CD8-positive, alpha-beta memory T cell (primary cell): ENCODE measurements at regions of chr12 and their contacts with region 1.

Region 1: GRCh38 chr12:6873094-6874014 is at the start of gene SPSB2:
- DNase-seq: peak; percentile 98 to 100 (median 99)
- H3K4me3 ChIP-seq: peak within 1 kb of the TSS; percentile 96
- H3K4me3 Mint-ChIP-seq: peak within 1 kb of the TSS; percentile 83 to 97 (median 89)
- H3K27ac ChIP-seq: peak within 1 kb of the TSS; percentile 90
- H3K27ac Mint-ChIP-seq: peak within 1 kb of the TSS; percentile 85 to 99 (median 92)
- H3K4me1 ChIP-seq: peaks cover 40% of the 10 kb centered on the region
- H3K4me1 Mint-ChIP-seq: peaks cover 41 to 53% (median 52%) of the 10 kb centered on the region in 3 donors
- H3K27me3 ChIP-seq: no peaks in the 10 kb centered on the region
- H3K27me3 Mint-ChIP-seq: no peaks in the 10 kb centered on the region
- total RNA-seq, gene SPSB2: 7.7 to 8.1 TPM

Region 2: GRCh38 chr12:6825398-6826124 is 47.8 kb before region 1 on chr12:
- CTCF ChIA-PET with region 1: interaction called, 14 read pairs
- POLR2A ChIA-PET with region 1: interaction called, 4 read pairs
- DNase-seq: peak; percentile 62 to 80 (median 71)
- H3K4me3 ChIP-seq: no peak overlapping the region
- H3K4me3 Mint-ChIP-seq: peak overlapping the region in 1 of 7 donors; percentile 70
- H3K27ac ChIP-seq: no peak overlapping the region
- H3K27ac Mint-ChIP-seq: no peak overlapping the region
- H3K4me1 ChIP-seq: peaks cover 18% of the 10 kb centered on the region
- H3K4me1 Mint-ChIP-seq: peaks cover 20 to 36% (median 24%) of the 10 kb centered on the region in 3 donors
- H3K27me3 ChIP-seq: peaks cover 25% of the 10 kb centered on the region
- H3K27me3 Mint-ChIP-seq: peaks cover 26 to 68% of the 10 kb centered on the region in 2 donors

Region 3: DNA sequence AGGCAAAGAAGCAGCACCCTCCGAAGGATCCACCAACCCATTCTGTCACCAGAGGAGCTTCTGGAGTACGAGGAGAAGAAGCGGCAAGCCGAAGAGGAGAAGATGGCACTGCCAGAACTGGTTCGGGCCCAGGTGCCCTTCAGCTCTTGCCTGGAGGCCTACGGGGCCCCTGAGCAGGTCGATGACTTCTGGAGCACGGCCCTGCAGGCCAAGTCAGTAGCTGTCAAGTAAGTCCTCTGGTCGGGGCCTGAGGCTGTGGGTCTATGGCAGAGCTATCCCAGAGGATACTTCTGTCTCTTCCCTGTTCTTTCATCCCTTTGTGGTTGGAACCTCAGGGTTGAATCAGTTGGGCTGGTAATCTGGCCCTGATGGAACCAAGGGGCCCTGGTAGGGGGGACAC is 12.0 kb before region 1 on chr12:
- CTCF ChIA-PET with region 1: interaction called, 128 read pairs
- POLR2A ChIA-PET with region 1: interaction called, 5 read pairs
- DNase-seq: no peak
- H3K4me3 ChIP-seq: no peak overlapping the region
- H3K4me3 Mint-ChIP-seq: no peak overlapping the region
- H3K27ac ChIP-seq: no peak overlapping the region
- H3K27ac Mint-ChIP-seq: no peak overlapping the region
- H3K4me1 ChIP-seq: no peaks in the 10 kb centered on the region
- H3K4me1 Mint-ChIP-seq: peaks cover 0 to 5% (median 3%) of the 10 kb centered on the region in 3 donors
- H3K27me3 ChIP-seq: no peaks in the 10 kb centered on the region
- H3K27me3 Mint-ChIP-seq: no peaks in the 10 kb centered on the region

Region 4: GRCh38 chr12:6904280-6905278 is 31.2 kb after region 1 on chr12 and contains the start of gene LRRC23:
- CTCF ChIA-PET with region 1: interaction called, 45 read pairs
- POLR2A ChIA-PET with region 1: no interaction called
- DNase-seq: peak; percentile 97 to 99 (median 98)
- H3K4me3 ChIP-seq: peak within 1 kb of the TSS; percentile 86
- H3K4me3 Mint-ChIP-seq: peak within 1 kb of the TSS in 1 of 7 donors; percentile 19
- H3K27ac ChIP-seq: peak within 1 kb of the TSS; percentile 95
- H3K27ac Mint-ChIP-seq: peak within 1 kb of the TSS in 1 of 8 donors; percentile 78
- H3K4me1 ChIP-seq: peaks cover 16% of the 10 kb centered on the region
- H3K4me1 Mint-ChIP-seq: peaks cover 0 to 5% (median 0%) of the 10 kb centered on the region in 3 donors
- H3K27me3 ChIP-seq: no peaks in the 10 kb centered on the region
- H3K27me3 Mint-ChIP-seq: no peaks in the 10 kb centered on the region
- total RNA-seq, gene LRRC23: 4.9 to 5.0 TPM

Region 5: DNA sequence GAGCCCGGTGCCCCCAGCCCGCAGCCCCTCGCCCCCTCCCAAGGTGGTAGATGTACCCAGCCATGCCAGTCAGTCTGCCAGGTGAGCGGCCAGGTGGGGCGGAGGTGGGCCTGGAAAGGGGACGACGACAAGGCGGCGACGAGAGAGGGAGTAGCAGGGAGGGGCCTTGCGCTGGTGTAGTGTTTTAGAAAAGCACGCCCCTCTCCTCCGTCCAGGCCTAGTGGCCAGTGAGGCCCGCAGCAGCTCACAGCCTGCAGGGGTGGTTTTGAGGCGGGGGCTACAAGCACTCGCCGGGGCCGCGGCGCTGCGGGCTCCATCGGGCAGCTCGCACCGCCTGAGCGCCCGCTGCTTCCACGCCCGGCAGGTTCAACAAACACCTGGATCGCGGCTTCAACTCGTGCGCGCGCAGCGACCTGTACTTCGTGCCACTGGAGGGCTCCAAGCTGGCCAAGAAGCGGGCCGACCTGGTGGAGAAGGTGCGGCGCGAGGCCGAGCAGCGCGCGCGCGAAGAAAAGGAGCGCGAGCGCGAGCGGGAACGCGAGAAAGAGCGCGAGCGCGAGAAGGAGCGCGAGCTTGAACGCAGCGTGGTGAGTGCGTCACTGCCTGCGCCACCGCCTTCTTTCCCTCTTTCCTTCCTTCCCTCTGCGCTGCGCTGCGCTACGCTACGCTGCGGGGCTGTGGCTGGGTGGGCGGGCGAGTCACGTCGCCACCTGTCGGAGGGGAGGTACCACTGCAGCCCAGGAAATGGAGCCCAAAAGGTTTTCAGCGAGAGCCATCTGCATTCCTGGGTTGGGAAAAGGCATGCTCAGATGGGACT is 64.3 kb after region 1 on chr12:
- CTCF ChIA-PET with region 1: interaction called, 34 read pairs
- POLR2A ChIA-PET with region 1: interaction called, 22 read pairs
- DNase-seq: peak; percentile 90 to 96 (median 93)
- H3K4me3 ChIP-seq: peak overlapping the region; percentile 86
- H3K4me3 Mint-ChIP-seq: peak overlapping the region; percentile 82 to 91 (median 85)
- H3K27ac ChIP-seq: peak overlapping the region; percentile 87
- H3K27ac Mint-ChIP-seq: peak overlapping the region; percentile 92 to 98 (median 94)
- H3K4me1 ChIP-seq: peaks cover 34% of the 10 kb centered on the region
- H3K4me1 Mint-ChIP-seq: peaks cover 27 to 49% (median 35%) of the 10 kb centered on the region in 3 donors
- H3K27me3 ChIP-seq: no peaks in the 10 kb centered on the region
- H3K27me3 Mint-ChIP-seq: peaks cover 0 to 1% of the 10 kb centered on the region in 2 donors

Region 6: DNA sequence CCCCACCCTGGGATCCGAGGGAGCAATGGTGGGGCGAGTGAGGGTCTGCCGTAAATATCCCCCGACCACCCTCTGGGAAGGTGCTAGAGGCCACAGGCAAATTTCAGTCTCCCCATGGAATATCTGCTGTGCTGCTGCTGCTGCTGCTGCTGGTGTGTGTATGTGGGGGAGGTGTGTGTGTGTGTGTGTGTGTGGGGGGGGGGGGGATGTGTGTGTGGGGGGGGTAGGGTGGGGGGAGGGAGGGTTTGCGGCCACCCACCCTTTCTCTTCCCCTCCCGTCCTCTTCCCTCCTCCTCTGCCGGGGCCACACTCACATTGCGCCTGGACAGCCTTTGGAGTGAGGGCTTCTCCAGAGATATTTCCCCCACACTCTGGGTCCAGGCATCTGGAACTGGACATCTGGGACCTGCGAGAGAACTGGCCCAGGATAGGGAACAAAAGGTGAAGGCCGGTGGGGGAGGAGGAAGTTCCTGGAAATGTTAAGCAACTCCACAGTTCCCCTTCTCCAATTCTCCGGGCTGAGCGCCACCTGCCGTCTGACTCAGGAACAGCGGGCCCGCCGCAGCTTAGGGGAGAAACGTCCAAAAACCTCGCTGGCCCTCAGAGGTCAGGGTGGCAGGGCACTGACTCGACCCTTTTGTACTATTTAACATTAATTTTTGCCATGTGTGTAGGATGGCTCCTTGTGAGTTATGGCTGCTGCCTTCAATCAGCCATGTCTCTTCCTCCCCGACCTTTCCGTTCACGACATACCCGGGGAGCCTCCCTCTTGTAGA is 235.6 kb after region 1 on chr12 and contains the start of gene C1RL:
- CTCF ChIA-PET with region 1: interaction called, 64 read pairs
- POLR2A ChIA-PET with region 1: interaction called, 4 read pairs
- DNase-seq: peak; percentile 62 to 83 (median 76)
- H3K4me3 ChIP-seq: peak within 1 kb of the TSS; percentile 96
- H3K4me3 Mint-ChIP-seq: peak within 1 kb of the TSS; percentile 93 to 99 (median 95)
- H3K27ac ChIP-seq: peak within 1 kb of the TSS; percentile 75
- H3K27ac Mint-ChIP-seq: peak within 1 kb of the TSS; percentile 86 to 97 (median 94)
- H3K4me1 ChIP-seq: peaks cover 25% of the 10 kb centered on the region
- H3K4me1 Mint-ChIP-seq: peaks cover 46 to 57% (median 52%) of the 10 kb centered on the region in 3 donors
- H3K27me3 ChIP-seq: no peaks in the 10 kb centered on the region
- H3K27me3 Mint-ChIP-seq: peaks cover 0 to 2% of the 10 kb centered on the region in 2 donors
- total RNA-seq, gene C1RL: 12.7 to 14.2 TPM